PC-3 (cell line): ENCODE measurements at regions of chr12 and their contacts with region 1.

Region 1: DNA sequence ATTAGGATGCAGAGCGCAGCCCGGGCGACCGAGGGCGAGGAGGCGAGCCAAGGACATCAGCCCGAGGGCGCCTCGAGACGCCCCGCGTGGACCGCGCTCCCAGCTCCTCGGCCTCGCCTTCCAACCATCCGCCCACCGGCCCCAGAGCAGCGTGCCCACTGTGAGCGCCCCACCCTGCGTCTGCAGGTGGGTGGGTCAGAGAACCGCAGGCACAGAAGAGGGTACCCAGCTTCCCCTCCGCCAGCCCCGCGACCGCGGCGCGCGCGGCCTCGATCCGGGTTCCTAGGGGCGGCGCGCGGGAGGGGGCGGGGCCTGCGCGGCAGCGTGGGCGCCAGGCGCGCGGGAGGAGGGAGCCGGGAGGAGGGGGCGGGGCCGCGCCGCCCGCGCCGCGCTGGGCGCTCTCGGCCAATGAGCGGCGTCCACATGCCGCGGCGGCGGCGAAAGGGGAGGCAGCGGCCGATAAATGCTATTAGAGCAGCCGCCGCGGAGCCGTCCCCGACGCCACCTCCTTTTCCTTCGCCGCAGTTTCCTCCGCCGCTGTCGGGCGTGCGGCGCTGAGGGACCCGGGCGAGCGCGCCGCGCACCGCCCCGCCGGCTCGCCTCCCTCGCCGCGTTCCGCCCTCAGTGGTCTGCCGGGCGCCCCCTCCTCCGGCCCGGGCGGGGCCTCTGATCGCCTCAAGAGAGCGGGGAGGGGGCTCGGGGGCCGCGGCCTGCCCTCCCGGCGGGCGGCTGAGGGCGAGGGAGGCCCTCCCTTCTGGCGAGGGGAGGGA is at the start of gene ATP2A2:
- DNase-seq: peak; percentile 96
- ATAC-seq: peak; percentile 73
- H3K4me3 ChIP-seq: peak within 1 kb of the TSS; percentile 85
- H3K27ac ChIP-seq: peak within 1 kb of the TSS; percentile 84
- H3K4me1 ChIP-seq: peaks cover 39% of the 10 kb centered on the region
- H3K27me3 ChIP-seq: no peaks in the 10 kb centered on the region
- CTCF ChIP-seq: no peak
- total RNA-seq, gene ATP2A2: 174 and 211 TPM in 2 replicates

Region 2: DNA sequence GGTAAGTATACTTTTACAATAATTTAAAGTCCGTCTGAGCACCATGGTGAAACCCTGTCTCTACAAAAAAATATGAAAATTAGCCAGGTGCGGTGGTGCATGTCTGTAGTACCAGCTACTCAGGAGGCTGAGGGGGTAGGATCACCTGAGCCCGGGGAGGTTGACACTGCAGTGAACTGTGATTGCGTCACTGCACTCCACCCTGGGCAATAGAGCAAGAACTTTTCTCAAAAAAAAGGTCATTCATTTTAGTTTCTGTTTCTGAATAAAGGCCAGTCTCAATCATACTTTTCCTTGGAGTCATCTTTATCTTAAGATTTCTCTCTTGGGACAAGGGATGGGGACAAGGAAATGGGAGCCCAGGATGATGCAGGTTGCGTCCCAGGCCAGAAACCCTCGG is 268.8 kb before region 1 on chr12:
- CTCF ChIA-PET with region 1: no interaction called
- POLR2A ChIA-PET with region 1: no interaction called
- intact Hi-C with region 1: no loop called
- DNase-seq: no peak
- ATAC-seq: no peak
- H3K4me3 ChIP-seq: no peak overlapping the region
- H3K27ac ChIP-seq: no peak overlapping the region
- H3K4me1 ChIP-seq: no peaks in the 10 kb centered on the region
- H3K27me3 ChIP-seq: no peaks in the 10 kb centered on the region
- CTCF ChIP-seq: no peak

Region 3: DNA sequence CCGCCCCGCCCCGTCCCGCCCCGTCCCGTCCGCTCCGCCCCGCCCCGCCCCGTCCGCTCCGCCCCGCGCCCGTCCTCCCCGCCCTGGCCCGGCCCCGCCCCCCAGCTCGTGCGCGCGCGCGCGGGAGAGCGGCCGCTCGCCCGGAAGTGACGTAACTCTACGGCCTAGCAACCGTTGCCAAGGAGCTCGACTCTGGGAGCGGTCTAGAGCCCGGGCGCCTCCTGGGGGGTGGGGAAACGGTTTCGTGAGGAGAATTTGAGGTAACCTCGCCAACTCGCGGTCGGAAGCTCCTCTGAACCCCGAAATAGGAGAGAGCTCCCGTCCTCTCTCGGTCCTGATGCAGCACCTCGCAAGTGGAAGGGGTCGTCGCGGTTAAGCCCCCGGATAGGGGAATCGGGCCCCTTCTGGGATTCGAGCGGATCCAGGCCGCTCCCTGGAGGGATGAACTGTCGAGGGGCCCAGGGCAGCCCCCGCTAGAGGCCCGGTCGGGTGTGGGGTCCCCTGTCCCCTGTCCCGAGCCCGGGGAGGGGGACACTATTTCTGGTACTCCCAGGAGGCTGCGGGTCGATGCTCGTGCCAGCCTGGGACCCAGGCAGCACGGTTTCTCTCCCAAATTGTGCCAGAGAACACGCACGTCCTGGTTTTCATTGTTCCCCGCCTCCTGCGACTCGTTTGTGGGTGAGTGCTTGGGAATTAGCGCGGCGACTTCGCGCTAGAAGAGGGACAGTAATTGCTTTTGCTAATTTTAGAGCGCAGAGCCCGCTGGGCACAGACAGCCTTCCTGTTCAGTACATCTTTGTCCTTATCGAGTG is 156.6 kb before region 1 on chr12 and contains the start of gene IFT81:
- CTCF ChIA-PET with region 1: no interaction called
- POLR2A ChIA-PET with region 1: interaction called, 10 read pairs
- intact Hi-C with region 1: loop called (anchors 2 kb)
- DNase-seq: peak; percentile 97
- ATAC-seq: peak; percentile 91
- H3K4me3 ChIP-seq: peak within 1 kb of the TSS; percentile 86
- H3K27ac ChIP-seq: peak within 1 kb of the TSS; percentile 51
- H3K4me1 ChIP-seq: peaks cover 6% of the 10 kb centered on the region
- H3K27me3 ChIP-seq: no peaks in the 10 kb centered on the region
- CTCF ChIP-seq: no peak
- total RNA-seq, gene IFT81: 7.2 and 10.1 TPM in 2 replicates

Region 4: DNA sequence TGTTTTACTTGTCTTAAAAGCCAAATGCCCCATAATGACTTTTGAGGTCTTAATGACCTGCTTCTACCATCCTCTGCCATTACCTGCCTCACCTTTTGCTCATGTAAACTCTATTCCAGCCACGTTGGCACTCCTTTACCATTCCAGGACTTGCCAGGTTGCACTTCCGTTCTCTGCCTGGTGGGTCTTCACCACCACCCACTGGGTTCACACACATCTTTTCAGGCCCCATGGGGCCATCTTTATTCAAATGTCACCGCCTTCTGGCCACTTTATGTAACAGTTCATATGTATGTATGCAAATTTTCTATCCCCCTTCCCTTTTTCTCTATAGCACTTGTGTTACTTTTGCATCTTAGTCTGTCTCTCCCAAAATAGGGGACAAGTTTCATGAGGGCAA is 57.8 kb after region 1 on chr12:
- CTCF ChIA-PET with region 1: no interaction called
- POLR2A ChIA-PET with region 1: no interaction called
- intact Hi-C with region 1: loop called (anchors 2 kb)
- DNase-seq: peak; percentile 25
- ATAC-seq: peak; percentile 8; the same call in 1 of the 2 replicates
- H3K4me3 ChIP-seq: no peak overlapping the region
- H3K27ac ChIP-seq: peak overlapping the region; percentile 73
- H3K4me1 ChIP-seq: peaks cover 21% of the 10 kb centered on the region
- H3K27me3 ChIP-seq: no peaks in the 10 kb centered on the region
- CTCF ChIP-seq: peak; percentile 61